Natural killer cell (primary cell): ENCODE measurements at regions of chr10 and their contacts with region 1.

Region 1: GRCh38 chr10:14499601-14499904 is 168.8 kb upstream of the FRMD4A start:
- DNase-seq: no peak
- ATAC-seq: no peak
- H3K4me3 ChIP-seq: no peak overlapping the region
- H3K4me3 Mint-ChIP-seq: no peak overlapping the region
- H3K27ac ChIP-seq: no peak overlapping the region
- H3K27ac Mint-ChIP-seq: no peak overlapping the region
- H3K4me1 ChIP-seq: peaks cover 7% of the 10 kb centered on the region
- H3K4me1 Mint-ChIP-seq: peaks cover 6 to 11% of the 10 kb centered on the region in 2 donors
- H3K27me3 ChIP-seq: no peaks in the 10 kb centered on the region
- H3K27me3 Mint-ChIP-seq: peaks cover 0 to 9% of the 10 kb centered on the region in 2 donors
- CTCF ChIP-seq: no peak

Region 2: DNA sequence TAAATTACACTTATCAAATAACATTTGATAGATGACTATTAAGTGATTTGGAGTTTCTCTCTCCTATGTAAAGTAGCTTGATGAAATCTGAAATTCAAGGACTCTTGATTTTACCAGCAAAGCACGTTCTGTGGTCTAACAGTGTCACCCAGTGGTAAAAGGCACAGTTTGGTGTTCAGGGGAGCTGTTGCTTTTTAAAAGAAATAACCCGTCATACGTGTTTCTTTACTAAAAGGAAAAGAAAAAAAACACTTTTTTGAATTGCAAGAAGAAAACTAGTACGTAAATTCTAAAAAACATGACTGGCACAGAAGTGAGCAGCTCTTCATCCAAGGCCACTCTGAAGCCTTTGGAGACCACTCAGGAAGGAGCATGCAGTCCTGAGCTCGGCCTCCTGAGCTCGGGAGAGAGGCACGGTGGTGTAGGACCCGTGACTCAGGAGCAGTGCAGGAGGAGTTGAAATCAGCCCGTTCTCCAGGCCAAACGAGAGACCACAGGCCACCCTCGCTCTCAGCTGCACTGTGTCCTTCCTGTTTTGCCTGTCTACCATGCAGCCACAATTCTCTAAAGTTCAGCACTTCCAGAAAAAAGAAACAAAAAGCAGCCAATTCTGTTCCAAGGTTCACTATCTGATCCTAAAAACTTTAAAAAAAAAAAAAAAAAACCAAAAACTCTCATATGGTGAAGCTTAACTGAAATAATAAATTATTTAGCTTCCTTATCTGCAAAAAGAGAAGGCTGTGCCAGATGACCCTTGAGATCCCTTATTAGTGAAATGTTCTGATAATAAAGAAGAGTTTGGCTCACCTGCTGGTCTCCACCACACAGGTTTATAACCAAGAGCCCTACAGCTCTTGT is 43.7 kb after region 1 on chr10:
- intact Hi-C with region 1: loop called (anchors 1 kb)
- DNase-seq: peak in 1 of 2 donors; percentile 81
- ATAC-seq: peak; percentile 71 to 85 (median 82)
- H3K4me3 ChIP-seq: no peak overlapping the region
- H3K4me3 Mint-ChIP-seq: peak overlapping the region; percentile 78
- H3K27ac ChIP-seq: peak overlapping the region; percentile 73
- H3K27ac Mint-ChIP-seq: peak overlapping the region; percentile 78 to 98
- H3K4me1 ChIP-seq: peaks cover 41% of the 10 kb centered on the region
- H3K4me1 Mint-ChIP-seq: peaks cover 84 to 93% of the 10 kb centered on the region in 2 donors
- H3K27me3 ChIP-seq: no peaks in the 10 kb centered on the region
- H3K27me3 Mint-ChIP-seq: no peaks in the 10 kb centered on the region
- CTCF ChIP-seq: peak; percentile 78

Region 3: GRCh38 chr10:14837757-14838581 is 338.4 kb after region 1 on chr10 and contains the starts of genes CDNF, HSPA14 and MSANTD7:
- intact Hi-C with region 1: loop called (anchors 5 kb)
- DNase-seq: peak; percentile 98 to 100
- ATAC-seq: peak; percentile 92 to 99 (median 93)
- H3K4me3 ChIP-seq: peak within 1 kb of the TSS; percentile 95
- H3K4me3 Mint-ChIP-seq: peak within 1 kb of the TSS; percentile 95
- H3K27ac ChIP-seq: peak within 1 kb of the TSS; percentile 92
- H3K27ac Mint-ChIP-seq: peak within 1 kb of the TSS; percentile 91 to 98
- H3K4me1 ChIP-seq: peaks cover 20% of the 10 kb centered on the region
- H3K4me1 Mint-ChIP-seq: peaks cover 15 to 30% of the 10 kb centered on the region in 2 donors
- H3K27me3 ChIP-seq: no peaks in the 10 kb centered on the region
- H3K27me3 Mint-ChIP-seq: no peaks in the 10 kb centered on the region
- CTCF ChIP-seq: no peak
- total RNA-seq, gene CDNF: 1.8 to 2.2 (median 1.9) TPM
- total RNA-seq, gene HSPA14: 18.9 to 25.6 (median 24.5) TPM
- total RNA-seq, gene MSANTD7: 19.6 to 25.1 (median 24.0) TPM

Region 4: DNA sequence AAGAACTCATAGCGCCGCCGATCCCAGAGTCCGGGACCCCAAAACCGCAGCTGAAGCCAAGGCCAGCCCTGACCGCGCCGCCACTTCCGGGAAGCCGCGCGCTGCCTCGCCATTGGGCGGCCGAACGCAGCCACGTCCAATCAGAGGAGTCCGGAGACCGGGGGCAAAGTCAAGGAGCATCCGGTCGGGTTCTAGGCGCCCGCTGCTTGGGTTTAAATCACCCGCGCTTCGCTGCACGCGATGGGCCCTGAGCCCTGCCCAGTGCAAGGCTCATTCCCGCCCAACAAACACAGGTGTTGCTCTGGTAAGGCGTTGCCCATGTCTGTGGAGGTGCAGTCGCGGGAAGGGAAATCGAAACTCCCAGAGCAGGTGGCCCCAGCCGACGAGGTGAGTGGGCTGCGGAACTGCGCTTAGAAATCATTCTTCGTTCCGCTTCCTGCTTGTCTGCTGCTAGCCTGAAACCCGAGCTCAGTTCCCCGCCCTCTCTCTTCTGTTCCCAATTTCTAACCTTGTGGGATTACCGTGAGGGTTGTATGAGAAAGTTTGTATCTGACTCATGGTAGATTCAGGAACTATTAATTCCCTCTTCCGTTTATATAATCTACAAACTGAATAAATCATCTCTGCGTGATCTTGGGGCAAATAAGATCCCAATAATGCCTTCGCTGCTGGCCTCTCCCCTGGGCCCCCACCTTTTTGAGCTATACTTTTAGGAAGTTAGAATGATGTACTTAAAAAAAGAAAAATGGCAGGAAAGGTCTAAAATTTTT is 454.6 kb after region 1 on chr10 and contains the start of gene DCLRE1C:
- intact Hi-C with region 1: loop called (anchors 5 kb)
- DNase-seq: peak; percentile 88 to 92
- ATAC-seq: peak; percentile 90 to 97 (median 96)
- H3K4me3 ChIP-seq: peak within 1 kb of the TSS; percentile 86
- H3K4me3 Mint-ChIP-seq: peak within 1 kb of the TSS; percentile 97
- H3K27ac ChIP-seq: peak within 1 kb of the TSS; percentile 93
- H3K27ac Mint-ChIP-seq: peak within 1 kb of the TSS; percentile 94 to 95
- H3K4me1 ChIP-seq: peaks cover 34% of the 10 kb centered on the region
- H3K4me1 Mint-ChIP-seq: peaks cover 49 to 50% of the 10 kb centered on the region in 2 donors
- H3K27me3 ChIP-seq: no peaks in the 10 kb centered on the region
- H3K27me3 Mint-ChIP-seq: no peaks in the 10 kb centered on the region
- CTCF ChIP-seq: no peak
- total RNA-seq, gene DCLRE1C: 21.7 to 31.3 (median 22.3) TPM

Region 5: GRCh38 chr10:15106352-15107013 is 606.9 kb after region 1 on chr10:
- intact Hi-C with region 1: loop called (anchors 5 kb)
- DNase-seq: peak; percentile 61 to 84
- ATAC-seq: peak; percentile 91 to 99 (median 98)
- H3K4me3 ChIP-seq: no peak overlapping the region
- H3K4me3 Mint-ChIP-seq: no peak overlapping the region
- H3K27ac ChIP-seq: no peak overlapping the region
- H3K27ac Mint-ChIP-seq: peak overlapping the region; percentile 18 to 27
- H3K4me1 ChIP-seq: peaks cover 4% of the 10 kb centered on the region
- H3K4me1 Mint-ChIP-seq: peaks cover 6 to 14% of the 10 kb centered on the region in 2 donors
- H3K27me3 ChIP-seq: no peaks in the 10 kb centered on the region
- H3K27me3 Mint-ChIP-seq: no peaks in the 10 kb centered on the region
- CTCF ChIP-seq: peak; percentile 91